PC-9 (cell line): ENCODE measurements at regions of chr11 and their contacts with region 1.

Region 1: DNA sequence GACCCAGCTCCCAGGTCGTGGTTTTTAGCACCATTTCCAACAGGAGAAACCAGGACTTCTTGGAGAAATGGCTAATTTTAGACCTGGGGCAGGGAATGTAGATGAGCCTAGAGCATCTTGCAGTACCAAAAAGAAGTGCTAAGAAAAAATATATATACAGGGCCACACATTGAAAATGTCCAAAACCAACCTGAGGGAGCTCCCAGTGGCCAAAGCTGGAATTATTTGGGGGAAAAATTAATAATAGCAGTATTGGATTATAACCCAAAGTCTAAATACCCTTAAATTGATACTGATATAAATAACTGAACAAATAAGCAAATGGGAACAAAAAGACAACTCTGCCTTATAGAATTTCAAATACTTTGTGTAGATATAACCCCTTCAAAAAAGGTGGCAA is 108.0 kb downstream of the PARVA start:
- DNase-seq: no peak
- H3K4me3 ChIP-seq: no peak overlapping the region
- H3K27ac ChIP-seq: no peak overlapping the region
- H3K4me1 ChIP-seq: no peaks in the 10 kb centered on the region
- H3K27me3 ChIP-seq: no peaks in the 10 kb centered on the region
- CTCF ChIP-seq: peak; percentile 58; the same call in 1 of the 2 replicates

Region 2: DNA sequence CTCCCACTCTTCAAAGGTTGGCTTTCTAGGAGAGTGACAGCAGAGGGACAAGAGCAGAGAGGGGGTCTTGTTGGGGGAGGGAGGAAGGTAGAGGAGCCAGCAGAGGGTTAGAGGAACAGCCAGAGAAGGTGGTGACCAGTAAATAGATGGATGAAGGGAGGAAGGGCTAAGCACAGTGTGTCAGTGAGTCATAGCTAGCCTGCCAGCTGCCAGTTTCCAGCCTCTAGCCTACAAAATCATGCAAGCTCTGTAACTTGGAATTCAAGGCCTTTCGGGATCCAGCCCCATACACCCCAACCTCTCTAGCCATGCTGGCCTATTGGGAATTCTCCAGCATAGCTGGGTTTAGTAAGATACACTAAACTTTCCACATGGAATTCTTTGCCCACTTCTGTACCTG is 41.5 kb after region 1 on chr11:
- CTCF ChIA-PET with region 1: no interaction called
- POLR2A ChIA-PET with region 1: interaction called, 17 read pairs
- intact Hi-C with region 1: no loop called
- DNase-seq: no peak
- H3K4me3 ChIP-seq: no peak overlapping the region
- H3K27ac ChIP-seq: no peak overlapping the region
- H3K4me1 ChIP-seq: no peaks in the 10 kb centered on the region
- H3K27me3 ChIP-seq: no peaks in the 10 kb centered on the region
- CTCF ChIP-seq: no peak